ENCODE measurements at regions of chr6 and their contacts with region 1.

Region 1: GRCh38 chr6:2522521-2522920 is 228.2 kb downstream of the MYLK4 start:
- DNase-seq: peak; percentile 64
- H3K4me3 ChIP-seq: no peak overlapping the region
- H3K27ac ChIP-seq: peak overlapping the region; percentile 54
- H3K4me1 ChIP-seq: peaks cover 12% of the 10 kb centered on the region
- H3K27me3 ChIP-seq: no peaks in the 10 kb centered on the region
- CTCF ChIP-seq: no peak
- POLR2A ChIP-seq: no peak

Region 2: GRCh38 chr6:2579241-2579761 is 56.8 kb after region 1 on chr6:
- CTCF ChIA-PET with region 1: interaction called, 4 read pairs
- POLR2A ChIA-PET with region 1: no interaction called
- dilution Hi-C with region 1: no loop called
- intact Hi-C with region 1: loop called (anchors 2 kb)
- DNase-seq: peak; percentile 21
- H3K4me3 ChIP-seq: no peak overlapping the region
- H3K27ac ChIP-seq: peak overlapping the region; percentile 69
- H3K4me1 ChIP-seq: peaks cover 44% of the 10 kb centered on the region
- H3K27me3 ChIP-seq: no peaks in the 10 kb centered on the region
- CTCF ChIP-seq: no peak
- POLR2A ChIP-seq: no peak

Region 3: DNA sequence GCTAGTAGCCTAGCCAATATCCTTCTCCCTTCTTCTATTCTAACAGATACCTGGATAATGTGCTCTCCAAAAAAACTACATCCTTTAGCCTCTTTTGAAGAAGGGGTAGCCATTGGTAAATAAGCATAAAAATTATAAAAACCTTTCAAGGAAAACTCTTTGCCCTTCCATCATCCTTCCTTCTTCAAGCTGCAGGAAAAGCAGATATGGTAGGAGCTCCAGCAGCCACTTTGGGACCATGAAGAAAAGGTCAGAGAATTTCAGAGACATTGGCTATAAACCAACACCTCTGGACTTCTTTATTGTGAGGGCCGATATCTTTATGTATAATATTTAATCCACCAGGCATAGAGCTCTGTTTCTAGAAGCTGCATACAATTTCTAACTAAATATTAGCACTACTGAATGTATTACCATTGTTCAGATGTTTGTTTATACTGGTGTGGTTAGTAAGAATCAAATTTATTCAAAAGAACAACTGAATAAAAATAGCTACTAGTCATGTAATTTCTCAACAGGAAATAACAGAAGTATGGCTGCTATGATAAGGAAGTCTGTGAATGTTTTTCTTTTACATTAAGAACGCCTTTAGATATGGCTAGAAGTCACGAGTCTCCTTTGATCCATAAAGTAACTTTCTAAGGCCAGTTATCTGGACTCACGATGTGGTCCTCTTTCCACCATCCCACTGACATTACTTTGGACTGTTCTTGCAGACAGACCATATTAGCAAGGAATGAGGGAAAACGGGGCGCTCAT is 196.0 kb after region 1 on chr6:
- CTCF ChIA-PET with region 1: no interaction called
- POLR2A ChIA-PET with region 1: no interaction called
- dilution Hi-C with region 1: no loop called
- intact Hi-C with region 1: loop called (anchors 2 kb)
- DNase-seq: peak; percentile 81
- H3K4me3 ChIP-seq: no peak overlapping the region
- H3K27ac ChIP-seq: peak overlapping the region; percentile 89
- H3K4me1 ChIP-seq: peaks cover 23% of the 10 kb centered on the region
- H3K27me3 ChIP-seq: no peaks in the 10 kb centered on the region
- CTCF ChIP-seq: no peak
- POLR2A ChIP-seq: no peak

Region 4: DNA sequence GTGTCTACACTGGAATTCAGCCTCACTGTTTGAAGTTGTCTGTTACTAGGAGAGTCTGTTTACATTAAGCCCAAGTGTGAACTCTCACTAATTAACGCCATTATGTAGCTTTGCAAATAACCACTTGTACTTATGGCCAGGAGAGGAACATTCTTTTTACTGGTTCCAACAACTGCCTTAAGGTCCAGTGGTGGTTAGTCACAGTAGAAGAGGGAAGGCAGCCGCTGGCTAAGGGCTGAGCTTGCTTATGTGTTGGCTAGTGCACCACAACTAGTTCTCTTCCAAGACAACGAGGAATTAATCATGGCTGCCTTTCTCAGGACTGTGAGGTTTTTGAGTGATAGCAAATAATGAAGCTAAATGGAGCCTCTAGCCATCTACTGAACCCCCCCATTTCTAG is 949.2 kb after region 1 on chr6:
- CTCF ChIA-PET with region 1: no interaction called
- POLR2A ChIA-PET with region 1: no interaction called
- dilution Hi-C with region 1: no loop called
- intact Hi-C with region 1: no loop called
- DNase-seq: no peak
- H3K4me3 ChIP-seq: no peak overlapping the region
- H3K27ac ChIP-seq: no peak overlapping the region
- H3K4me1 ChIP-seq: no peaks in the 10 kb centered on the region
- H3K27me3 ChIP-seq: no peaks in the 10 kb centered on the region
- CTCF ChIP-seq: no peak
- POLR2A ChIP-seq: no peak

Measured in endothelial cell of umbilical vein (primary cell).